ENCODE measurements at regions of chr1 and their contacts with region 1.

Region 1: GRCh38 chr1:171313835-171314320 is at the start of gene FMO4:
- DNase-seq: peak; percentile 96
- H3K4me3 ChIP-seq: peak within 1 kb of the TSS; percentile 29 to 32 (median 30)
- H3K27ac ChIP-seq: peak within 1 kb of the TSS; percentile 83
- H3K4me1 ChIP-seq: peaks cover 3% of the 10 kb centered on the region
- H3K27me3 ChIP-seq: no peaks in the 10 kb centered on the region
- CTCF ChIP-seq: peak; percentile 74 to 86
- total RNA-seq, gene FMO4: 1.8 to 7.0 TPM

Region 2: DNA sequence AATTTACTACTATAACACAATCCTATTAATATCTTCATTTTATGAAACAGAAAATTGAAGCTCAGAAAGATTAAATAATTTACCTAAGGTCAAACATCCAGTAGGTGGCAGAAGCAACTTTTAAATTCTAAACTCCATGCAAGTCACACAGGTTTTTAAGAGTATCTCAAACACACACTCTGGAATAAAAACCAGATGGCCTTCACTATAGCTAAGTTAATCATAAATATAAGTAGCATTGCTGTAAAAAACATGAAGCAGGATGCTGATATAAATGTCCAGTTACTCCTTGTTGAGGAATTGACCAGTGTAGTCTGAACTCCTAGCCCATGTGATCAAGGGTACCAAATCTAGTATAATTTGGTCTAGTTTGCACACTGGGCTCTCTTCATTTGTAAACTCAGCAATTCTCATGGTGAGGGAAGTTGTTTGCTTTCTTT is 232.5 kb before region 1 on chr1:
- CTCF ChIA-PET with region 1: interaction called, 14 read pairs
- dilution Hi-C with region 1: no loop called
- in situ Hi-C with region 1: no loop called
- intact Hi-C with region 1: loop called (anchors 1 kb)
- DNase-seq: peak; percentile 9
- H3K4me3 ChIP-seq: no peak overlapping the region
- H3K27ac ChIP-seq: no peak overlapping the region
- H3K4me1 ChIP-seq: no peaks in the 10 kb centered on the region
- H3K27me3 ChIP-seq: no peaks in the 10 kb centered on the region
- CTCF ChIP-seq: peak; percentile 23 to 50

Region 3: GRCh38 chr1:171226747-171227370 is 87.0 kb before region 1 on chr1:
- CTCF ChIA-PET with region 1: interaction called, 10 read pairs
- dilution Hi-C with region 1: no loop called
- in situ Hi-C with region 1: no loop called
- intact Hi-C with region 1: loop called (anchors 5 kb)
- DNase-seq: peak; percentile 55
- H3K4me3 ChIP-seq: no peak overlapping the region
- H3K27ac ChIP-seq: no peak overlapping the region
- H3K4me1 ChIP-seq: peaks cover 20% of the 10 kb centered on the region
- H3K27me3 ChIP-seq: no peaks in the 10 kb centered on the region
- CTCF ChIP-seq: peak; percentile 53 to 86

Region 4: GRCh38 chr1:171403371-171403770 is 89.5 kb after region 1 on chr1:
- CTCF ChIA-PET with region 1: interaction called, 5 read pairs
- dilution Hi-C with region 1: no loop called
- in situ Hi-C with region 1: no loop called
- intact Hi-C with region 1: loop called (anchors 10 kb)
- DNase-seq: peak; percentile 52
- H3K4me3 ChIP-seq: no peak overlapping the region
- H3K27ac ChIP-seq: peak overlapping the region; percentile 1
- H3K4me1 ChIP-seq: peaks cover 13% of the 10 kb centered on the region
- H3K27me3 ChIP-seq: no peaks in the 10 kb centered on the region
- CTCF ChIP-seq: no peak